ENCODE measurements at regions of chr12 and their contacts with region 1.

Region 1: GRCh38 chr12:104671407-104672098 is 214.8 kb downstream of the CHST11 start:
- DNase-seq: peak; percentile 92
- H3K4me3 Mint-ChIP-seq: peak overlapping the region; percentile 57
- H3K27ac Mint-ChIP-seq: peak overlapping the region; percentile 89
- H3K4me1 Mint-ChIP-seq: peaks cover 59% of the 10 kb centered on the region
- H3K27me3 Mint-ChIP-seq: no peaks in the 10 kb centered on the region

Region 2: GRCh38 chr12:104569346-104570173 is 102.0 kb before region 1 on chr12:
- intact Hi-C with region 1: loop called (anchors 1 kb)
- DNase-seq: peak; percentile 86
- H3K4me3 Mint-ChIP-seq: peak overlapping the region; percentile 66
- H3K27ac Mint-ChIP-seq: peak overlapping the region; percentile 83
- H3K4me1 Mint-ChIP-seq: peaks cover 53% of the 10 kb centered on the region
- H3K27me3 Mint-ChIP-seq: no peaks in the 10 kb centered on the region

Region 3: GRCh38 chr12:104702565-104703139 is 31.1 kb after region 1 on chr12:
- intact Hi-C with region 1: no loop called
- DNase-seq: no peak
- H3K4me3 Mint-ChIP-seq: no peak overlapping the region
- H3K27ac Mint-ChIP-seq: no peak overlapping the region
- H3K4me1 Mint-ChIP-seq: peaks cover 45% of the 10 kb centered on the region
- H3K27me3 Mint-ChIP-seq: no peaks in the 10 kb centered on the region

Region 4: GRCh38 chr12:104720339-104721038 is 48.9 kb after region 1 on chr12:
- intact Hi-C with region 1: loop called (anchors 1 kb)
- DNase-seq: peak; percentile 93
- H3K4me3 Mint-ChIP-seq: peak overlapping the region; percentile 76
- H3K27ac Mint-ChIP-seq: peak overlapping the region; percentile 89
- H3K4me1 Mint-ChIP-seq: peaks cover 60% of the 10 kb centered on the region
- H3K27me3 Mint-ChIP-seq: no peaks in the 10 kb centered on the region

Region 5: DNA sequence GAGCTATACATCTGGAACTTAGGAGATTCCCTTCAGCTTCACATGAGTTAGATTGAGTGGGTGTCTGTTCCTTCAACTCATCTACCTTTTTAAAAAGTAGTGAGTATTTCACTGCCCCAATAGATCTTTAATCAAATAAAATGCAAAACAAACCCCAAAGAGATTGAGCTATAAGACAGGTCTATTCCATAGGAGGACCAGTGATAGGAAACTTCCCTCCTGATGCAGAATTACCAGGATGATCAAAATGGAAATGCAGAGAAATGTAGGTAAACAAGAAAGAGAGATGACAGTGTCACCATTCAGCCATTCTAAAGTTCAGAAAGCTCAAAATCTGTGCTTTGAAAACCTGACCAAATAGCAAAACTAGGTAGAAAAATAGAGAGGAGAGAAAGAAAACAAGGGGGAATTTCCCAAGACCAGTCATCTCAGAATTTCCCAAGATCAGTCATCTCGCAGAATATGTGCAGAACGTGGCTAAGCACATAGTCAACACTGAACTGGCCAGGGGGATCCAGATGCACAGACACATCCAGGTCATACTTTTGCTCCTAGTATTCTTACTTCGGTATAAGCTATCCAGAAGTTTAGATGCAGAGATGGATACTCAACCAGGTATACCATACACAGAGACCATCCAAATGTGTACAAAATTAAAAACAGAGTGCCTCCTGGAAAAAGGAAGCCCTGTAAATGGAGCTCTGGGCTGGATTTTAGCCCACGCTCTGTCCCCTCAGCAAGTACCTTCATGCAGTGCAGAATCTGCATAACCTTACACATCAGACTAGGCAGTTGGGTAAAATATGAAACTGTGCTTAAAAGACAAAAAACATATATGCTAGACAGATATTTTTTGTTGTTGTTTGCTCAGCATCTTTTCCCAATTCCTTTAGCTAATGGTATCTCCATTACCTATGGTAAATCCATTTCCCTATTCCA is 259.1 kb after region 1 on chr12:
- intact Hi-C with region 1: loop called (anchors 1 kb)
- DNase-seq: peak; percentile 79
- H3K4me3 Mint-ChIP-seq: peak overlapping the region; percentile 39
- H3K27ac Mint-ChIP-seq: peak overlapping the region; percentile 87
- H3K4me1 Mint-ChIP-seq: peaks cover 41% of the 10 kb centered on the region
- H3K27me3 Mint-ChIP-seq: no peaks in the 10 kb centered on the region

Measured in activated CD4-positive, alpha-beta T cell treated with anti-CD3 and anti-CD28 coated beads, Interleukin-2, amount 10 ng/mL, durations not matched to agents 24 days and 14 days (primary cell).